ENCODE measurements at regions of chr5 and their contacts with region 1.

Region 1: GRCh38 chr5:65102828-65103711 is 334.3 kb downstream of the CWC27 start:
- DNase-seq: peak; percentile 49
- H3K4me3 ChIP-seq: peak overlapping the region; percentile 47 to 54
- H3K27ac ChIP-seq: peak overlapping the region; percentile 82 to 85
- H3K4me1 ChIP-seq: no peaks in the 10 kb centered on the region
- H3K27me3 ChIP-seq: no peaks in the 10 kb centered on the region
- CTCF ChIP-seq: peak in 3 of 4 experiments; percentile 15 to 23 (median 22)
- POLR2A ChIP-seq: no peak

Region 2: GRCh38 chr5:64965613-64966012 is 137.5 kb before region 1 on chr5:
- intact Hi-C with region 1: loop called (anchors 10 kb)
- DNase-seq: no peak
- H3K4me3 ChIP-seq: no peak overlapping the region
- H3K27ac ChIP-seq: no peak overlapping the region
- H3K4me1 ChIP-seq: no peaks in the 10 kb centered on the region
- H3K27me3 ChIP-seq: no peaks in the 10 kb centered on the region
- CTCF ChIP-seq: no peak
- POLR2A ChIP-seq: no peak

Region 3: DNA sequence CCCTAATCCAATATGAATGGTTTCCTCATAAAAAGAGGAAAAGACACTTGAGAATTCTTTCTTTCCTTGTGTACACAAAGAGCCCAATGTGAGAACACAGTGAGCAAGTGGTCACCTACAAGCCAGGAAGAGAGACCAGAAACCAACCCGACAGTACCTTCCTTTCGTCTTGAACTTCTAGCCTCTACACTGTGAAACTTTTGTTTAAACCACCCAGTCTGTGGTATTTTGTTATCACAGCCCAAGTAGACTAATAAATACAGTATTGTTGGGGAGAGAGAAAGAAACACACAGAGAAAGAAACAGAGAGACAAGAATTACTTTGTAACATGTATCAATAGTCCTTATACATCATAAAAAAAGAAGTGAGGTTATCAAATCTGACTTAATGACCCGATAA is 422.7 kb after region 1 on chr5:
- intact Hi-C with region 1: no loop called
- DNase-seq: no peak
- H3K4me3 ChIP-seq: no peak overlapping the region
- H3K27ac ChIP-seq: no peak overlapping the region
- H3K4me1 ChIP-seq: no peaks in the 10 kb centered on the region
- H3K27me3 ChIP-seq: no peaks in the 10 kb centered on the region
- CTCF ChIP-seq: no peak
- POLR2A ChIP-seq: no peak

Measured in prostate gland (tissue), 2 donors.